Activated CD4-positive, alpha-beta memory T cell treated with anti-CD3 and anti-CD28 coated beads, Interleukin-2, amount 10 ng/mL, durations not matched to agents 7 days and 5 days (primary cell): ENCODE measurements at regions of chr1 and their contacts with region 1.

Region 1: DNA sequence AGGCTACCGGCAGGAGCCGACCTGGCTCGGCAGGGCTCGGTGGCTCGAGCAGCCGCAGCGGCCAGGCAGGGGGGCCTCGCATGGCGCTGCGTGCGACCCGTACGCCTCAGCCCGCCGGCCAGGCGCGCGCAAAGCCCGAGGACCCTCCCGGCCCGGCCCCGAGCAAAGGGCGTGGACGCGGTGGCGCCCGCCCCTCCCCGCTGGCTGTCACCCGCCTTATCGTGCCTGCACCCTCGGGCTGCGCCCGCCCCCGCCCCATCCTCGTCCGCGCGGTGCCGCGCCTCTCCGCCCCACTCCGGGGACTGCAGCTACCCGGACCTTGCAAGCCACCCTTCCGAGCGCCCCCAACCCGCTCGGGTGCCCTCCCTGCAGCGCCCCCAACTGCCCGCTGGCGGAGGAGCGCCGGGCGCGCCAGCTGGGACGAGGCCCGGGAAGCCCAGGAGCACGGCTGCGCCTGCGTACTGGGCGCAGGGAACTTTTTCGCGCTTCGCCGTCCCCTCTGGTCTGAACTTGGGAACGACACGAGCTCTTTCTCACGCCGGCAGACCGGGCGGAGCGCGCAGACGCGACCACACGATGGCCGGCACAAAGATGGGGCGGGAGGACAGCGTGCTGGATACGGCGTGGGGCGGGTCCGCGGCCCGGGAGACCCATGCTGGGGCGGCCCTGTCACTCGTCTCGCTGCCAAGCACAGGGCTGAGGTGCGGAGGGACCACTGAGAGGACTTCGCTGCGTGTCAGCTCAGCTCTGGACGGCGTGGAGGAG is at the start of gene ABCB10:
- DNase-seq: peak; percentile 86
- H3K4me3 Mint-ChIP-seq: peak within 1 kb of the TSS; percentile 98
- H3K27ac Mint-ChIP-seq: peak within 1 kb of the TSS; percentile 93
- H3K4me1 Mint-ChIP-seq: peaks cover 37% of the 10 kb centered on the region
- H3K27me3 Mint-ChIP-seq: peaks cover 4% of the 10 kb centered on the region
- total RNA-seq, gene ABCB10: 29.8 to 31.1 TPM

Region 2: GRCh38 chr1:229507951-229508822 is 50.6 kb before region 1 on chr1 and contains the start of gene NUP133:
- CTCF ChIA-PET with region 1: interaction called, 14 read pairs
- POLR2A ChIA-PET with region 1: interaction called, 24 read pairs
- DNase-seq: peak; percentile 98
- H3K4me3 Mint-ChIP-seq: peak within 1 kb of the TSS; percentile 83
- H3K27ac Mint-ChIP-seq: peak within 1 kb of the TSS; percentile 89
- H3K4me1 Mint-ChIP-seq: peaks cover 35% of the 10 kb centered on the region
- H3K27me3 Mint-ChIP-seq: no peaks in the 10 kb centered on the region
- total RNA-seq, gene NUP133: 36.9 to 38.2 TPM

Region 3: GRCh38 chr1:229625915-229626831 is 67.4 kb after region 1 on chr1 and contains the starts of genes TAF5L and URB2:
- CTCF ChIA-PET with region 1: interaction called, 17 read pairs
- POLR2A ChIA-PET with region 1: interaction called, 67 read pairs
- DNase-seq: peak; percentile 89
- H3K4me3 Mint-ChIP-seq: peak within 1 kb of the TSS; percentile 97
- H3K27ac Mint-ChIP-seq: peak within 1 kb of the TSS; percentile 93
- H3K4me1 Mint-ChIP-seq: peaks cover 51% of the 10 kb centered on the region
- H3K27me3 Mint-ChIP-seq: no peaks in the 10 kb centered on the region
- total RNA-seq, gene TAF5L: 21.0 to 23.9 TPM
- total RNA-seq, gene URB2: 7.1 to 8.3 TPM